Activated CD4-positive, alpha-beta T cell treated with anti-CD3 and anti-CD28 coated beads for 36 hours (primary cell): ENCODE measurements at regions of chr13 and their contacts with region 1.

Region 1: GRCh38 chr13:46184277-46184699 is 2.3 kb upstream of the LCP1 start:
- DNase-seq: peak; percentile 89
- ATAC-seq: peak; percentile 61
- H3K4me3 Mint-ChIP-seq: peak overlapping the region; percentile 97
- H3K27ac Mint-ChIP-seq: peak overlapping the region; percentile 98
- H3K4me1 Mint-ChIP-seq: peaks cover 35% of the 10 kb centered on the region
- H3K27me3 Mint-ChIP-seq: no peaks in the 10 kb centered on the region

Region 2: GRCh38 chr13:46052319-46053161 is 131.7 kb before region 1 on chr13 and contains the start of gene ZC3H13:
- CTCF ChIA-PET with region 1: no interaction called
- POLR2A ChIA-PET with region 1: no interaction called
- intact Hi-C with region 1: loop called (anchors 1 to 5 kb)
- DNase-seq: peak; percentile 96
- ATAC-seq: peak; percentile 99
- H3K4me3 Mint-ChIP-seq: peak within 1 kb of the TSS; percentile 83
- H3K27ac Mint-ChIP-seq: peak within 1 kb of the TSS; percentile 94
- H3K4me1 Mint-ChIP-seq: peaks cover 34% of the 10 kb centered on the region
- H3K27me3 Mint-ChIP-seq: peaks cover 2% of the 10 kb centered on the region
- total RNA-seq, gene ZC3H13: 38.5 to 52.8 TPM

Region 3: GRCh38 chr13:46160471-46161066 is 23.7 kb before region 1 on chr13:
- CTCF ChIA-PET with region 1: interaction called, 69 read pairs
- POLR2A ChIA-PET with region 1: interaction called, 8 read pairs
- intact Hi-C with region 1: loop called (anchors 1 kb)
- DNase-seq: no peak
- ATAC-seq: peak; percentile 52
- H3K4me3 Mint-ChIP-seq: peak overlapping the region; percentile 53
- H3K27ac Mint-ChIP-seq: peak overlapping the region; percentile 91
- H3K4me1 Mint-ChIP-seq: peaks cover 69% of the 10 kb centered on the region
- H3K27me3 Mint-ChIP-seq: no peaks in the 10 kb centered on the region

Region 4: DNA sequence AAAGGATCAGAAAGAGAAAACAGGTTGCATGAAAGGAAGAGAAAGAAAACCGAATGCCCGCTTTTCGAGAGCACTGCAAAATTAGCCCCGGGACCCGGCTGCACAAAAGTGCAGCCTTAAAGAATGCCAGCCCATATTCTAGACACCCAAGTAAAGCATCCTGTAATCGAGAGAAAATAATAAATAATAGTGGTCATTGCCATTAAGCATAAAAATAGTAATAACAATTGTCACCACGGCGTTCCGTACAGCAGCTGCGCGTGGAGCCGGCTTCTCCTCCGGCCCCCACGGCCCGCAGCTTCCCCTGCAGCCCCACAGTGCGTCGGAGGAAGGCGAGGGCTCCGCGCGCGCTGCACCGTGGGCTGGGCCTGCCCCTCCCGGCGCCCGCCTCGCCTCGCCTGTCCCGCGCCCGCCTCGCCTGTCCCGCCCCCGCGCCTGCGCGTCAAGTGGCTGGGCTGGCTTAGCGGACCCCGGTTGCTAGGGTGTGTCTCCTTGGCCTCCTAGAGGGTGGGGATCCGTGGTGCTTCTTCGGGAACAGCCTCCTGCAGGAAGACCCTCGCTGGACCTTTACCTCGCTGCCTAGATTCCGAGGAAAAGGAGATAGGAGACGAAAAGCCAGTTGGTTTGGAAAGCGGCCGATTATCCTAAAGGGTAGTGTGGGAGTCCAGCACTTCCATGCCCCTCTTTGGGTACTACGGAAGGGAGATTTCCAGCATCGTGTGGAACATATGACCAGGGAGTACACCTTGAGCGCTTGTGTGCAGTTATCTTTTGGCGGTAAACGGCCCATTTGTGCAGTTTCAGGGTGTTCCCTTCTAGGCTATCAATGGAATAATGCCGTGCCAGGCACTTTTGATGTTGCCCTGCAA is 27.4 kb after region 1 on chr13 and contains the start of gene LRRC63:
- CTCF ChIA-PET with region 1: interaction called, 4 read pairs
- POLR2A ChIA-PET with region 1: no interaction called
- intact Hi-C with region 1: loop called (anchors 1 kb)
- DNase-seq: peak; percentile 90
- ATAC-seq: peak; percentile 96
- H3K4me3 Mint-ChIP-seq: peak within 1 kb of the TSS; percentile 76
- H3K27ac Mint-ChIP-seq: peak within 1 kb of the TSS; percentile 88
- H3K4me1 Mint-ChIP-seq: peaks cover 23% of the 10 kb centered on the region
- H3K27me3 Mint-ChIP-seq: no peaks in the 10 kb centered on the region
- total RNA-seq, gene LRRC63: 0.50 to 0.67 TPM

Region 5: GRCh38 chr13:46341112-46341711 is 156.9 kb after region 1 on chr13:
- CTCF ChIA-PET with region 1: no interaction called
- POLR2A ChIA-PET with region 1: no interaction called
- intact Hi-C with region 1: loop called in 1 of 2 experiments (anchors 1 kb)
- DNase-seq: peak; percentile 69
- ATAC-seq: peak; percentile 96
- H3K4me3 Mint-ChIP-seq: peak overlapping the region; percentile 67
- H3K27ac Mint-ChIP-seq: peak overlapping the region; percentile 95
- H3K4me1 Mint-ChIP-seq: peaks cover 45% of the 10 kb centered on the region
- H3K27me3 Mint-ChIP-seq: peaks cover 2% of the 10 kb centered on the region

Region 6: DNA sequence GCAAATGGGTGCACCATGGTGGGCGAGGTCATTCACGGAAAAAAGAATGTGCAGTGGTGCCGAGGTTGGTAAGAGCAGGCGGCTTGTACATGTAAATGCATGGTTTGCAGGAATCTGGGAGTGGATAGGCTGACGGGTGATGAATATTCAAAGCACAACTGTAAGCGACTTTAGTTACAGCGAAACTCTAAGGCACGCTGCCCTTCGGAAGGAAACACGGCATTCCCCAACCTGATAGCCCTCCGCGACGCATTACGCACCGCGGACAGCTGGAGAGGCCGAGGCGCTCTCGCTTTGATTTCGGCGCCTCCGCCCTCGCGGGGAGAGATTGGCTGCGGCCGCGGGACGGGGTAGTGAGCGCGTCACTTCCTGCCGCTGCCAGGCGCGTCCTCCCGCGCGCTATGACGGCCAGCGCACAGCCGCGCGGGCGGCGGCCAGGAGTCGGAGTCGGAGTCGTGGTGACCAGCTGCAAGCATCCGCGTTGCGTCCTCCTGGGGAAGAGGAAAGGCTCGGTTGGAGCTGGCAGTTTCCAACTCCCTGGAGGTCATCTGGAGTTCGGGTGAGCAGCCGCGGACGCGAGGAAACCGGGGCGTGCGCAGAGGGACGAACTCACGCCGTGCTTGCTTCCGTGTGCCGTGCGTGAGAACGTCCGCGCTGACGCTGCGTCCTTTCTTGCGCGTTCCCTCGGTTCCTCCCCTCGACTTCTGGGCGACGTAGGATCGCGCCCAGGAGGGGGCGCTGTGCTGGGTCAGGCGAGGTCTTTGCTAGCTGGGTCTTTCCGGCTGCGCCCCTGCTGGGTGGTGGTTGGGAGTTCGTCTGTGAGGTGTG is 1853.3 kb after region 1 on chr13 and contains the start of gene NUDT15:
- CTCF ChIA-PET with region 1: no interaction called
- POLR2A ChIA-PET with region 1: no interaction called
- intact Hi-C with region 1: loop called in 1 of 2 experiments (anchors 5 kb)
- DNase-seq: peak; percentile 98
- ATAC-seq: peak; percentile 89
- H3K4me3 Mint-ChIP-seq: peak within 1 kb of the TSS; percentile 97
- H3K27ac Mint-ChIP-seq: peak within 1 kb of the TSS; percentile 96
- H3K4me1 Mint-ChIP-seq: peaks cover 34% of the 10 kb centered on the region
- H3K27me3 Mint-ChIP-seq: no peaks in the 10 kb centered on the region
- total RNA-seq, gene NUDT15: 12.3 to 18.2 TPM